Heart right ventricle (tissue), 16 donors: ENCODE measurements at regions of chr20 and their contacts with region 1.

Region 1: DNA sequence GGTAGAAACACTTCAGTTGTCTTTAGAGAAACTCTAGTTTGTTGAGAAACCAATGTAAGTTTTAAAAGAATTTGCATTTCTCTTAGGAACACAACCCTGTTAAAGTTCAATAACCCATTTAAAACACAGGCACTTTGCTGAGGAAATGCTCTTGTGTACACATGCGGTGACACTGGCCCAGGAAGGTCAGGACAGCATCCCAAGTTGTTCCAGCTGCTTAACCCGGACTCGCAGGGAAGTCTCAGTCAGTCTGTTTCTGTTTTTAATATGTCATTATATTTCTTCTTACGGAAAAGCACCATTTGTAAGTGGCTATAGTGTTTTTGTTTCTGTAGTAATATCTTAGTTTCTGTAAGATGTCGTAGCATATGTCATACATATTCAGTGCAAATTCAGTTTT is 36.9 kb downstream of the RIN2 start:
- DNase-seq: no peak
- ATAC-seq: peak in 3 of 8 donors; percentile 54 to 63 (median 55)
- H3K4me3 ChIP-seq: no peak overlapping the region
- H3K27ac ChIP-seq: peak overlapping the region in 1 of 10 donors; percentile 34
- H3K4me1 ChIP-seq: peaks cover 0 to 29% (median 16%) of the 10 kb centered on the region in 9 donors
- H3K27me3 ChIP-seq: no peaks in the 10 kb centered on the region
- CTCF ChIP-seq: no peak

Region 2: GRCh38 chr20:19815553-19815991 is 20.6 kb after region 1 on chr20:
- intact Hi-C with region 1: loop called in 1 of 10 experiments (anchors 1 kb)
- DNase-seq: peak in 1 of 2 donors; percentile 60
- ATAC-seq: peak; percentile 82 to 96 (median 92)
- H3K4me3 ChIP-seq: no peak overlapping the region
- H3K27ac ChIP-seq: peak overlapping the region; percentile 11 to 90 (median 60)
- H3K4me1 ChIP-seq: peaks cover 4 to 68% (median 55%) of the 10 kb centered on the region in 9 donors
- H3K27me3 ChIP-seq: no peaks in the 10 kb centered on the region
- CTCF ChIP-seq: peak in 4 of 9 donors; percentile 20 to 38 (median 26)

Region 3: GRCh38 chr20:19828232-19828631 is 33.3 kb after region 1 on chr20:
- intact Hi-C with region 1: loop called in 1 of 10 experiments (anchors 5 kb)
- DNase-seq: no peak
- ATAC-seq: peak in 7 of 8 donors; percentile 26 to 57 (median 38)
- H3K4me3 ChIP-seq: no peak overlapping the region
- H3K27ac ChIP-seq: peak overlapping the region in 3 of 10 donors; percentile 6 to 50 (median 41)
- H3K4me1 ChIP-seq: peaks cover 6 to 56% (median 38%) of the 10 kb centered on the region in 9 donors
- H3K27me3 ChIP-seq: no peaks in the 10 kb centered on the region
- CTCF ChIP-seq: peak in 7 of 9 donors; percentile 29 to 64 (median 43)

Region 4: GRCh38 chr20:20076297-20077065 is 281.5 kb after region 1 on chr20:
- intact Hi-C with region 1: no loop called
- DNase-seq: no peak
- ATAC-seq: peak in 1 of 8 donors; percentile 52
- H3K4me3 ChIP-seq: no peak overlapping the region
- H3K27ac ChIP-seq: no peak overlapping the region
- H3K4me1 ChIP-seq: peaks cover 0 to 7% (median 0%) of the 10 kb centered on the region in 9 donors
- H3K27me3 ChIP-seq: peaks cover 0 to 21% (median 5%) of the 10 kb centered on the region in 7 donors
- CTCF ChIP-seq: no peak